Dorsolateral prefrontal cortex (tissue), 120 donors: ENCODE measurements at regions of chr1 and their contacts with region 1.

Region 1: DNA sequence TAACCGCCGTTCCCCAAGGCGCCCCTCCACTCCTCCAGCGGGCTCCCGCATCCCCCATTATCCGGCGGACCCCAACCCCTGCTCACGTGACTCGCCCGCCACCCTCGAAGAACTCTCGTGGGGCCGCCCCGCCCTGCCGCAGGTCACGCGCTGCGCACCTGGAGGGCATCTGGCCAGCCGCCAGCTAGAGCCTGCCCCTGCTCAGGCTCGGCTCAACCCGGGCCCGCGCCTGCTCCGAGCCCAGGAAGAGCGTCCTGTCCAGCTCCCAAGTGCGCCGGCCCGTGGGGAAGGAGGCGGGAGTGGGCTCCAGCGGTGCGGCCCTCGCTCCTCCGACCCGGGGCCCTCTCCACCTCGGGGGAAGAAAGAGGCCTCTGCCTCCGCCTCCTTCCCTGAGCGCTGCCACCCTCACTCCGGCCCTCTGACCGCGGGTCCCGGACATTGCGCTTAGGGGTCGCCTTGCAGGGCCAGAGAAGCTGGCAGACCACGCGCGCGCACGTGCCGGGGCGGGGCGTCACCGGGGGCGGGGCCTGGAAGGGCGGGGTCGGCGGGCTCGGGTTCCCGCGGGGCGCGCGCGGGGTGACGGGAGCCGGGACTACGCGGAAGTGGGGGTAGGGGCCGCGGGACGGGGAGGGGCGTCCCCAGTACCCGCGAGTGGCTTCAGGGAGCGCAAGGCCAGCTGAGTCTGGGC is 28.4 kb downstream of the HMGN2 start:
- DNase-seq: peak; percentile 77 to 91 (median 82)
- H3K4me3 ChIP-seq: peak overlapping the region; percentile 63 to 96 (median 87)
- H3K27ac ChIP-seq: peak overlapping the region; percentile 74 to 98 (median 92)
- H3K27me3 ChIP-seq: no peaks in the 10 kb centered on the region
- CTCF ChIP-seq: peak in 31 of 56 donors; percentile 0 to 75 (median 31)

Region 2: DNA sequence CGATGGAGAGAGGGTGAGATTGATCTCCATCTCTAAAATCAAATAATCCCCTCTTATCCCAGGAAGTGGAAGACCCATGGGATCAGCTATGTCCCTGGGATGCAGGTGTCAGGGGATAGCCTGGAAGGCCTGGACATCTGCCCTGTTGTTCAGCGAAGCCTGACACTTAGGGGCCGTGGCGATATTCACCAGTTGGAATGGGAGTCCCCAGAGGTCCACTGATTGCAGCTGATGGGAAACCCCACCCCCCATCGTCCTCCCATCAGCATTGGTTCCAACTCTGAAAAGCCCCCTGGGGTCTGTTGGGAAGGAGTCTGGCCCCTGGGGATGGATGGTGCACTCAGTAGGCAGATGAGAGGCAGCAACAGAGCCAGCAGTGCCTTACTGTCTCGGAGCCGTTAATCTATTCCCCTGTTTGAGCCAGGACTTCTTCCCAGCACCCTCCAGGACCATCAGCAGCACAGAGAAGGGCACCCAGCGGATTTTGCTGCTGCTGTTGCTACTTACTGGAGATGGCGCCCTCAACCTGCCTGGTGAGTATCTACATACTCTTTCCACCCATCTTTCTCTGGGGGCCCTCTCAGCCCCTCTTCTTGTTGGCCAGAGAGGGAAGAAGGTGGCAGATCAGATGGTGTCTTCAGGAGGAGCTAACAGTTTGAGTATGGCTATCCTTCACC is 296.9 kb before region 1 on chr1:
- intact Hi-C with region 1: no loop called
- DNase-seq: no peak
- H3K4me3 ChIP-seq: no peak overlapping the region
- H3K27ac ChIP-seq: no peak overlapping the region
- H3K27me3 ChIP-seq: peaks cover 0 to 2% (median 0%) of the 10 kb centered on the region in 45 donors
- CTCF ChIP-seq: no peak

Region 3: GRCh38 chr1:26431979-26432695 is 68.5 kb before region 1 on chr1 and contains the start of gene DHDDS:
- intact Hi-C with region 1: loop called in 1 of 2 experiments (anchors 2 kb)
- DNase-seq: peak; percentile 95 to 99 (median 98)
- H3K4me3 ChIP-seq: peak within 1 kb of the TSS; percentile 54 to 98 (median 82)
- H3K27ac ChIP-seq: peak within 1 kb of the TSS in 58 of 59 donors; percentile 22 to 88 (median 78)
- H3K27me3 ChIP-seq: no peaks in the 10 kb centered on the region
- CTCF ChIP-seq: peak in 31 of 56 donors; percentile 6 to 65 (median 34)
- total RNA-seq, gene DHDDS: 32.0 to 72.7 (median 50.8) TPM

Region 4: DNA sequence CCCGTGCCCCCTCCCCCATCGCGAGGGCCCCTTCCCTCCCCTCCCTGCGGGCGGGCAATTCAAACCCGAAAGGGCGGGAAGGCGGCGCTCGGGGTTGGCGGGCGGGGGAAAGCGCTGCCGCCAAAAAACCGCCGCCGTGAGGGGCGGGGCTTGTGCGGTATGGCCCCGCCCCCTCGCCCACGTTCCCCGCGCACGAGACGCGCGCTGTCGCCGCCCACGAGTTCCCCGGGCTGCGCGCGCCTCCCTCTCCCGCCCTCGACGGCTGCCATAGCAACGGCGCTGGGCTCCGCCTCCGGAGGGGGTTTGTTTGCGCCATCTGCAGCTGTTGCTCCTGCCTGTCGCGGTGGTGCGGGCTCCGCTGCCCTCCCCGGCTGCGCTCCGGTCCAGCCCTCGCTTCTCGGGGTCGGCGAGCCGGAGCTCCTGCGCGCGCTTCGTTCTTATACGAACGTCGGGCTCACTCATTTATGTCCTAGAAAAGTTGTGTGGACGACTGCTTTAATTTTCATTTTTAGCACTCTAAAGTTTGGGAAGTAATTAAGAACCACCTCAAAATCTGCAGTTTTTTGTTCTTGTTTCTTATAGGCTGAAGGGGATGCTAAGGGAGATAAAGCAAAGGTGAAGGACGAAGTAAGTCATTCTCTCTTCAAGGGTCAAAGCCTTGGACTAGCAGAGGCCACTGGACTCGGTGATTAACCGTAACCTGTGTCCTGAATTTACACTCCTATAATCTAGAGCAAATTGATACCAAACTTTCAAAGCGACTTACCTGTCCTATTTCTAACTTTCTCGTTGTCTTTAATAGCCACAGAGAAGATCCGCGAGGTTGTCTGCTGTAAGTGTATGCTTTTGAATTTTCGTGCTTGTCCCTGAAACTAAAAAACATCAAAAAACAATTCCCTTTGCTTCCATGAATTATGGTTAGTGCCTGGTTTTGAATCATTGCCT is 27.5 kb before region 1 on chr1:
- intact Hi-C with region 1: loop called in 1 of 2 experiments (anchors 2 kb)
- DNase-seq: peak; percentile 94 to 99 (median 96)
- H3K4me3 ChIP-seq: peak overlapping the region; percentile 55 to 100 (median 96)
- H3K27ac ChIP-seq: peak overlapping the region; percentile 97 to 100 (median 100)
- H3K27me3 ChIP-seq: no peaks in the 10 kb centered on the region
- CTCF ChIP-seq: peak in 20 of 56 donors; percentile 9 to 44 (median 21)

Region 5: DNA sequence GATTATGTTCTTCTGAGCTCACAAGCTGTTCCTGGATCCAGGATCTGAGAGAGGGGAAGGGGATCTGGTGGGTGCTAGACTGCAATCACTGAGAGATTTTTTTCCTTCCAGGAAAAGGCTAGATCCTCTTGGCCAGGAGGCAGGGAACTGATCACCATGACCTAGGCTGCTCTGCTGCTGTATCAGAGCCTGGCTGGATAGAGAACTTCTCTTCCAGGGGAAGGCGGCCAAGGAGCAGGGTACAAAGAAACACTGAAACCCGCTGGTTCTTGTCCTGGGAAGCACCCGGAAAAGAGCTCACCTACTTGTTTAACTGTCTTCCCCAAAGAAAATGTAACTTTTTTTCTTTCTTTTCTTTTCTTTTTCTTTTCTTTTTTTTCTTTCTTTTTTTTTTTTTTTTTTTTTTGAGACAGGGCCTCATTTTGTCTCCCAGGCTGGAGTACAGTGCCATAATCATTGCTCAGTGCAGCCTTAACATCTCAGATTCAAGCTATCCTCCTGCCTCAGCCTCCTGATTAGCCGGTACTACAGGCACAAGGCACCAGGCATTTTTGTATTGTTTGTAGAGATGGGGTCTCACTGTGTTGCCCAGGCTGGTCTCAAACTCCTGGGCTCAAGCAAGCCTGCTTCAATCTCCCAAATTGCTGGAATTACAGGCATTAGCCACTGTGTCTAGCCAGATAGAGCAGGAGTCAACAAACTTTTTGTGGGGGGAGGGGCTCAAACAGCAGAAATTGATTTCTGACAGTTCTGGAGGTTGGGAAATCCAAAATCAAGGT is 16.5 kb after region 1 on chr1:
- intact Hi-C with region 1: no loop called
- DNase-seq: no peak
- H3K4me3 ChIP-seq: no peak overlapping the region
- H3K27ac ChIP-seq: no peak overlapping the region
- H3K27me3 ChIP-seq: no peaks in the 10 kb centered on the region
- CTCF ChIP-seq: no peak

Region 6: GRCh38 chr1:26529655-26530409 is 29.2 kb after region 1 on chr1 and contains the start of gene RPS6KA1:
- intact Hi-C with region 1: loop called in 1 of 2 experiments (anchors 2 kb)
- DNase-seq: peak in 9 of 10 donors; percentile 51 to 88 (median 65)
- H3K4me3 ChIP-seq: peak within 1 kb of the TSS; percentile 53 to 95 (median 74)
- H3K27ac ChIP-seq: peak within 1 kb of the TSS in 51 of 59 donors; percentile 15 to 91 (median 71)
- H3K27me3 ChIP-seq: no peaks in the 10 kb centered on the region
- CTCF ChIP-seq: peak in 5 of 56 donors; percentile 9 to 33 (median 11)
- total RNA-seq, gene RPS6KA1: 11.3 to 46.0 (median 22.5) TPM

Region 7: GRCh38 chr1:26541816-26542711 is 41.4 kb after region 1 on chr1:
- intact Hi-C with region 1: no loop called
- DNase-seq: peak in 8 of 10 donors; percentile 39 to 71 (median 64)
- H3K4me3 ChIP-seq: peak overlapping the region in 14 of 59 donors; percentile 35 to 54 (median 47)
- H3K27ac ChIP-seq: peak overlapping the region; percentile 60 to 95 (median 88)
- H3K27me3 ChIP-seq: no peaks in the 10 kb centered on the region
- CTCF ChIP-seq: peak in 29 of 56 donors; percentile 7 to 60 (median 34)

Region 8: DNA sequence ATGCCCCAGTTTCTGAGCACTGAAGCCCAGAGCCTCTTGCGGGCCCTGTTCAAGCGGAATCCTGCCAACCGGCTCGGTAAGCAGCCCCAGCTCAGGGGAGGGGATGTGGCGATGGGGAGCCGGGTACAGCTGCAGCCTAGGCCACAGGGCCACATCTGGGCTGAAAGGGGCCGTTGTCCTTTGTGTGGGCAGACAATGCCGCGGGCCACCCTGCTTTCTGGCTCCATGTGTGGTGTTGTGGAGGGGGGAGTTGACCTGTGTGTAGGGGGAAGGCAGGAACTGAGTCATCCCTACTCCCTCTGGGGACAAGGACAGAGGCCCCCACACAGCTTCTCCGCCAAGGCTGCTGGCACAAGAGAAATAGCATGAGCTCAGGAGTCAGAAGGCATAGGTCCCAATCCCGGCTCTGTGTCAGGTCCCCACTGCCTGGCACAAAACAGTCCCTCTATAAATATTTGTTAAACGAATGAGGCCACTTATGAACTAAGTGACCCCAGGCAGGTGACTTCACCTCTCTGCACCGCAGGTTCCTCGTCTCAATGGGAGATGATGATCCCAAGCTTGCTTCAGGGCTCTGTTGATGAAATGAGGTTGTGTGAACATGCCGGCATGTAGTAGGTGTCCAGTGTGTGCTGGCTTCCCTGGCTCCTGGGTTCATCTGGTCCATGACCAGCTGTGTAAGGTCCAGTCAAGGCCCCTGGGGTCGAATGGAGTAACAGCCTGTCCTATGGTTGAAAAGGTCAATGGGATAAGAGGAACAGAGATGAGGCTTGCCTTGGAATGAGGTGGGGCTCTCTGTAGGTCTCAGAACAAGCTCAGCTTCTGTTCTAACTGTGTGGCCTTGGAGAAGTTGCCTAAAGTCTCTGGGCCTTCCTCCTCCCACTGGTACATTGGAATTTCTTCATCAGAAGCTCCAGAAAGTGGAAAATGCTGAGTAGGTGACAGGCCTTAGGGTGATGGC is 55.2 kb after region 1 on chr1:
- intact Hi-C with region 1: loop called in 1 of 2 experiments (anchors 2 kb)
- DNase-seq: peak; percentile 40 to 97 (median 93)
- H3K4me3 ChIP-seq: no peak overlapping the region
- H3K27ac ChIP-seq: peak overlapping the region; percentile 65 to 100 (median 97)
- H3K27me3 ChIP-seq: no peaks in the 10 kb centered on the region
- CTCF ChIP-seq: peak in 10 of 56 donors; percentile 11 to 34 (median 24)

Region 9: GRCh38 chr1:26695356-26696118 is 194.9 kb after region 1 on chr1 and contains the start of gene ARID1A:
- intact Hi-C with region 1: loop called (anchors 10 kb)
- DNase-seq: peak; percentile 86 to 95 (median 92)
- H3K4me3 ChIP-seq: peak within 1 kb of the TSS; percentile 65 to 97 (median 89)
- H3K27ac ChIP-seq: peak within 1 kb of the TSS; percentile 87 to 100 (median 98)
- H3K27me3 ChIP-seq: no peaks in the 10 kb centered on the region
- CTCF ChIP-seq: peak in 45 of 56 donors; percentile 15 to 56 (median 35)
- total RNA-seq, gene ARID1A: 65.3 to 158 (median 93.3) TPM

Region 10: DNA sequence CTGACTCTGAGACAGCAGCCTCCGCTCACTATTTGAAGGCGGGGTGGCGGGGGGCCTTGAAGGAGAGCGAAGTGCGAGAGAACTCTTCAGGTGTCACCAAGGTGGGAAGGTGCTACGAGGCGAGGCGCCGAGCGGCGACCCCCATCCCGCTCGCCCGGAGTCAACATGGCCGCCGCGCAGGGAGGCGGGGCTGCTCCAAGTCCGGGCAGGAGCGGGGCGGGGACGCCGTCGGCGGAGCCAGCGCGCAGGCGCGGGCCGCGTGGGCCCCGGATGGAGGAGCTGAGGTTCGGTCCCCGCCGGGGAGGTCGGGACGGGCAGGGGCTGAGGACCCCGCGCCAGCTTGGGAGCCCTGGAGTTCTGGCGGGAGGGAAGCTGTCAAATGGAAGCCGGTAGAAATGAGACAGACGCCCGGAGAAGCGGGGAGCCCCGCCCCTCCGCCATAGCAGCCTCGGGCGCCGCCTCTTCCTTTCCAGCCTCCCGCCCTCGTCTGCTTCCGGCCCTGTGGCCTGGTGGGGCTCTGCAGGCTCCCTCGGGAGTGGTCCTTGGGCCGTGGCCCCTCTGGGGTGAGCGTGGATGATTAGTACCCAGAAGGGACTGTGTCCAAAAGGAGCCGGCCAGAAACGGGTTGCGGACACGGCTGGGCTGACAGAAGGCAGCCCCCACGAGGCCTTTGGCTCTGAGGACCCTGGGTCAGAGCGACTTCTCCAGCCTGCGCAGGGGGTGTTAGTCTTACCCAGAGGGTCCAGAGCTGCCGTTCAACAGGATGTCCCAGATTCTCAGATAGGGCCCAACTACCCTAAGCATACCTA is 287.3 kb after region 1 on chr1 and contains the start of gene PIGV:
- intact Hi-C with region 1: loop called (anchors 2 to 10 kb)
- DNase-seq: peak; percentile 75 to 90 (median 84)
- H3K4me3 ChIP-seq: peak within 1 kb of the TSS; percentile 65 to 98 (median 87)
- H3K27ac ChIP-seq: peak within 1 kb of the TSS; percentile 95 to 100 (median 100)
- H3K27me3 ChIP-seq: no peaks in the 10 kb centered on the region
- CTCF ChIP-seq: peak in 50 of 56 donors; percentile 10 to 63 (median 44)
- total RNA-seq, gene PIGV: 9.1 to 22.9 (median 14.3) TPM

Region 11: DNA sequence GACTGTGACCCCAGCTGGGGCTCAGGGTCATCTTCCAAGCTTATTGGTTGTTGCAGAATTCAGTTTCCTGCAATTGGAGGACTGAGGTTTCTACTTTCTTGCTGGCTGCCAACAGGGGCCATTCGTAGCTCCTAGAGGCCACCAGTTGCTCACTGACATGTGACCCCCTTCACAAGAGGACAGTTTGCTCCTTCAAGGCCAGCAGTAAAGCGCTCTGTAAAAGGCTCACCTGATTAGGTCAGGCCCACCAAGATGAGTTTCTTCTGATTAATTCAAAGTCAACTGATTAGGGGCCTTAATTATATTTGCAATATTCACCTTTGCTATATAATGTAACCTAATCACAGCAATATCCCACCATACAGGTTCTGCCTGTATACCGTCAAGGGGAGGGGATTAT is 585.4 kb after region 1 on chr1:
- intact Hi-C with region 1: no loop called
- DNase-seq: no peak
- H3K4me3 ChIP-seq: no peak overlapping the region
- H3K27ac ChIP-seq: no peak overlapping the region
- H3K27me3 ChIP-seq: peaks cover 0 to 4% (median 0%) of the 10 kb centered on the region in 45 donors
- CTCF ChIP-seq: no peak